Prostate gland (tissue), 2 donors: ENCODE measurements at regions of chr5 and their contacts with region 1.

Region 1: DNA sequence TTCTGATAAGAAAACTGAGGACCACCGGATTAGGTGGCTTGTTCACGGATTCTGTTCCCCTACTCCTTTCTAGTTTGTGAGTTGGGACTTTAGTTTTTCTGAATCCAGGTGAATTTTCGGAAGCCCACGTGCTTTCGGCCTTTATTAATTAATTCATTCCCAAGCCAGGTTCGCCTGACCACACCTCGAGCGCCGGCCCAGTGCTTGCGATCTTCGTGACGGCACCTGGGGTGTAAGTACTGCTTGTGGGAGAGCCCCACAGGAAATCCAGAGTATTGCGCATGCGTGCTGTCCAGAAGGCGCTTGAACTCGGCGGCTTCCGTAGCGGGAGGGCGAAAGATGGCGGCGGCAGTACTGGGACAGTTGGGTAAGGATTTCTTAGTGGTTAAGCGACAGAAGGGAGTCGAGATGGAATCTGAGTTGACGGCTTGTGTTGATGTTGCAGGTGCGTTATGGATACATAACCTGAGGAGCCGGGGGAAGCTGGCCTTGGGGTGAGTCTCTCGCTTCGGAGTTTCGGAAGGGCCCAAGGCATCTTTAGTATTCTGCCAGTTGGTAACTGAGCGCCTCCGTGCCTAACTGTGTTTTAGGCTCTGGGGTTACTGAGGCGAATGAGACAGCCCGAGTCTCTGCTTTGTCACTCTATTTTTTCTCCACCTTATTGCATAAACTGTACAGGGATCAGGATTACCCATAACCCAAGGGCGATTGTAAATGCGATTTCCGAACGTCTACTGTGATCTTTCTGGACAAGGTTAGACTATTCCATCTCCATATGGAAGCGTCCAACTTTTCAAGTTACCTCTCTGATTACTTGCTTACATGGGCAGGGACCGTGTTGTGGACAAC is at the start of gene MRPL22:
- DNase-seq: peak; percentile 89
- H3K4me3 ChIP-seq: peak within 1 kb of the TSS; percentile 55 to 56
- H3K27ac ChIP-seq: peak within 1 kb of the TSS; percentile 59 to 66
- H3K4me1 ChIP-seq: peaks cover 7% of the 10 kb centered on the region
- H3K27me3 ChIP-seq: no peaks in the 10 kb centered on the region
- CTCF ChIP-seq: peak in 2 of 4 experiments; percentile 40 to 44
- POLR2A ChIP-seq: peak; percentile 60
- total RNA-seq, gene MRPL22: 14.4 to 35.2 TPM

Region 2: GRCh38 chr5:154783774-154784460 is 157.1 kb before region 1 on chr5:
- intact Hi-C with region 1: no loop called
- DNase-seq: no peak
- H3K4me3 ChIP-seq: no peak overlapping the region
- H3K27ac ChIP-seq: no peak overlapping the region
- H3K4me1 ChIP-seq: peaks cover 4% of the 10 kb centered on the region
- H3K27me3 ChIP-seq: no peaks in the 10 kb centered on the region
- CTCF ChIP-seq: no peak
- POLR2A ChIP-seq: no peak

Region 3: GRCh38 chr5:154834053-154834452 is 106.9 kb before region 1 on chr5:
- intact Hi-C with region 1: no loop called
- DNase-seq: peak; percentile 38
- H3K4me3 ChIP-seq: no peak overlapping the region
- H3K27ac ChIP-seq: peak overlapping the region in 1 of 2 donors; percentile 5
- H3K4me1 ChIP-seq: peaks cover 5% of the 10 kb centered on the region
- H3K27me3 ChIP-seq: no peaks in the 10 kb centered on the region
- CTCF ChIP-seq: no peak
- POLR2A ChIP-seq: no peak

Region 4: GRCh38 chr5:154857530-154858296 is 83.3 kb before region 1 on chr5:
- intact Hi-C with region 1: loop called (anchors 5 kb)
- DNase-seq: peak; percentile 92
- H3K4me3 ChIP-seq: peak overlapping the region; percentile 75 to 82
- H3K27ac ChIP-seq: peak overlapping the region; percentile 97 to 98
- H3K4me1 ChIP-seq: peaks cover 6% of the 10 kb centered on the region
- H3K27me3 ChIP-seq: no peaks in the 10 kb centered on the region
- CTCF ChIP-seq: peak in 2 of 4 experiments; percentile 19 to 28
- POLR2A ChIP-seq: peak; percentile 69

Region 5: GRCh38 chr5:155229135-155229534 is 288.1 kb after region 1 on chr5:
- intact Hi-C with region 1: no loop called
- DNase-seq: no peak
- H3K4me3 ChIP-seq: no peak overlapping the region
- H3K27ac ChIP-seq: no peak overlapping the region
- H3K4me1 ChIP-seq: no peaks in the 10 kb centered on the region
- H3K27me3 ChIP-seq: no peaks in the 10 kb centered on the region
- CTCF ChIP-seq: no peak
- POLR2A ChIP-seq: no peak